ENCODE measurements at regions of chr20 and their contacts with region 1.

Region 1: GRCh38 chr20:30500829-30501440 is 756.5 kb upstream of the DEFB115 start:
- DNase-seq: no peak
- ATAC-seq: no peak
- H3K4me3 ChIP-seq: no peak overlapping the region
- H3K27ac ChIP-seq: no peak overlapping the region
- H3K4me1 ChIP-seq: no peaks in the 10 kb centered on the region
- H3K27me3 ChIP-seq: no peaks in the 10 kb centered on the region
- CTCF ChIP-seq: no peak
- EP300 ChIP-seq: no peak
- POLR2A ChIP-seq: no peak
- RAD21 ChIP-seq: no peak

Region 2: DNA sequence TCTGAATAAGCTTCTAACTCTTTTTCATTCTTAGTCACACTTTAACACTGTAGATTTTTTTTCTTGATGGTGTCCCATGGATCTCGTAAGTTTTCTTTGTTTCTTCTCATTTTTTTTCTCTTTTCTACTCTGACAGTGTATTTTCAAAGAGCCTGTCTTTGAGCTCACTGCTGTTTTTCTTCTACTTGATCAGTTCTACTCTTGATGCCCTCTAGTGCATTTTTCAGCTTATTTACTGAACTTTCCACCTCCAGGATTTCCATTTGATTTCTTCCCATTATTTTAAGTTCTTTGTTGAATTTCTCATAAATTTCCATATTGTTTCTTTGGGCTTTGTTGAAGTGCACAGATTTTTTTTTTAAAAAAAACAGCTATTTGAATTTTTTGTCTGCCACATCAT is 1884.6 kb before region 1 on chr20:
- CTCF ChIA-PET with region 1: no interaction called
- POLR2A ChIA-PET with region 1: no interaction called
- RAD21 ChIA-PET with region 1: no interaction called
- SMC1A ChIA-PET with region 1: no interaction called
- in situ Hi-C with region 1: loop called (anchors 25 kb)
- intact Hi-C with region 1: no loop called
- DNase-seq: no peak
- ATAC-seq: no peak
- H3K4me3 ChIP-seq: no peak overlapping the region
- H3K27ac ChIP-seq: no peak overlapping the region
- H3K4me1 ChIP-seq: no peaks in the 10 kb centered on the region
- H3K27me3 ChIP-seq: no peaks in the 10 kb centered on the region
- CTCF ChIP-seq: no peak
- EP300 ChIP-seq: no peak
- POLR2A ChIP-seq: no peak
- RAD21 ChIP-seq: no peak

Region 3: GRCh38 chr20:30485331-30486102 is 15.4 kb before region 1 on chr20:
- CTCF ChIA-PET with region 1: no interaction called
- POLR2A ChIA-PET with region 1: no interaction called
- RAD21 ChIA-PET with region 1: no interaction called
- SMC1A ChIA-PET with region 1: no interaction called
- in situ Hi-C with region 1: no loop called
- intact Hi-C with region 1: no loop called
- DNase-seq: no peak
- ATAC-seq: no peak
- H3K4me3 ChIP-seq: no peak overlapping the region
- H3K27ac ChIP-seq: no peak overlapping the region
- H3K4me1 ChIP-seq: no peaks in the 10 kb centered on the region
- H3K27me3 ChIP-seq: no peaks in the 10 kb centered on the region
- CTCF ChIP-seq: no peak
- EP300 ChIP-seq: no peak
- POLR2A ChIP-seq: no peak
- RAD21 ChIP-seq: no peak

Region 4: DNA sequence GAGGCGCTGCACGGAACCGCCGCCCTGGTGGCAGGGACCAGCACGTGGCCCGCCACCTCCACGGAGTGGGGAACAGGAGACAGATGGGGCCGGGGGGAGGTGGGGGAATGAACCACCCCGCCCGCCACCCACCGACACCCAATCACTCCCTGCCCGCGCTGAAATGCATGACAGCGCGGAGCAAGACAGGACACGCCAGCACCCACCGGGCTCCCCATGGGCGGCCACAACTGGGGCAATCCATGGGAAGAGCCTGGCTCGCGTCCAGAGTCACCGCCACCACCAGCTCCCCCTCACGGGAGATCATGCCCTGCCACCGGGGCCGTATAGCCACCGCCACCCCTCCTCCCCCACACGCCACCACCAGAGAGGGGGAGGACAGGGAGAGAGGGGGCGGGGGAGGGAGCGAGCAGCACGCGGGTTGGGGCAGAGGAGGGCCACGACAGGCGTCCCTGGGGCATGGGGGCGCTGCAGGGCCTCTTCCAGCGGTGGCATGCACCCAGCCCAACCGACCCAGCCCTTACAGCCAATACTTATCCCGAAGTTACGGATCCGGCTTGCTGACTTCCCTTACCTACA is 12.2 kb after region 1 on chr20:
- CTCF ChIA-PET with region 1: no interaction called
- POLR2A ChIA-PET with region 1: no interaction called
- RAD21 ChIA-PET with region 1: no interaction called
- SMC1A ChIA-PET with region 1: no interaction called
- in situ Hi-C with region 1: no loop called
- intact Hi-C with region 1: no loop called
- DNase-seq: no peak
- ATAC-seq: no peak
- H3K4me3 ChIP-seq: no peak overlapping the region
- H3K27ac ChIP-seq: no peak overlapping the region
- H3K4me1 ChIP-seq: no peaks in the 10 kb centered on the region
- H3K27me3 ChIP-seq: no peaks in the 10 kb centered on the region
- CTCF ChIP-seq: no peak
- EP300 ChIP-seq: no peak
- POLR2A ChIP-seq: no peak
- RAD21 ChIP-seq: no peak

Measured in GM12878 (cell line).